ENCODE measurements at regions of chr1 and their contacts with region 1.

Region 1: GRCh38 chr1:227542143-227543120 is 20.9 kb upstream of the ZNF678 start:
- DNase-seq: peak; percentile 70
- H3K4me3 ChIP-seq: peak overlapping the region; percentile 2 to 64 (median 23)
- H3K27ac ChIP-seq: no peak overlapping the region
- H3K4me1 ChIP-seq: peaks cover 8% of the 10 kb centered on the region
- H3K27me3 ChIP-seq: no peaks in the 10 kb centered on the region
- CTCF ChIP-seq: peak; percentile 87 to 96
- POLR2A ChIP-seq: no peak

Region 2: DNA sequence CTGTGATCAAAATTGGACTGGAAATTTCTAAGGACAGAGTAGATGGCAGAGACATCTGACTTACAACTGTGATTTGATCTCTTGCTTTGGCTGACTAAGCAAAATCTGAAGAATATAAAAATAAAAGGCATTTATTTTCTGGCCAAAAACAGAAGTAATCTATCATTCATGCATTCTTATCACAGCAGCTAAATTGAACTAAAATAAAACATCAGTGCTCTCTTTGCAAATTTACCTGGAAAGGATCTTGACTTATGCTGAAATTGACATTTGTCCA is 60.5 kb before region 1 on chr1:
- CTCF ChIA-PET with region 1: interaction called, 35 read pairs
- POLR2A ChIA-PET with region 1: no interaction called
- dilution Hi-C with region 1: no loop called
- intact Hi-C with region 1: loop called (anchors 1 kb)
- DNase-seq: no peak
- H3K4me3 ChIP-seq: no peak overlapping the region
- H3K27ac ChIP-seq: no peak overlapping the region
- H3K4me1 ChIP-seq: no peaks in the 10 kb centered on the region
- H3K27me3 ChIP-seq: peaks cover 2 to 28% of the 10 kb centered on the region in 2 experiments
- CTCF ChIP-seq: no peak
- POLR2A ChIP-seq: no peak

Region 3: DNA sequence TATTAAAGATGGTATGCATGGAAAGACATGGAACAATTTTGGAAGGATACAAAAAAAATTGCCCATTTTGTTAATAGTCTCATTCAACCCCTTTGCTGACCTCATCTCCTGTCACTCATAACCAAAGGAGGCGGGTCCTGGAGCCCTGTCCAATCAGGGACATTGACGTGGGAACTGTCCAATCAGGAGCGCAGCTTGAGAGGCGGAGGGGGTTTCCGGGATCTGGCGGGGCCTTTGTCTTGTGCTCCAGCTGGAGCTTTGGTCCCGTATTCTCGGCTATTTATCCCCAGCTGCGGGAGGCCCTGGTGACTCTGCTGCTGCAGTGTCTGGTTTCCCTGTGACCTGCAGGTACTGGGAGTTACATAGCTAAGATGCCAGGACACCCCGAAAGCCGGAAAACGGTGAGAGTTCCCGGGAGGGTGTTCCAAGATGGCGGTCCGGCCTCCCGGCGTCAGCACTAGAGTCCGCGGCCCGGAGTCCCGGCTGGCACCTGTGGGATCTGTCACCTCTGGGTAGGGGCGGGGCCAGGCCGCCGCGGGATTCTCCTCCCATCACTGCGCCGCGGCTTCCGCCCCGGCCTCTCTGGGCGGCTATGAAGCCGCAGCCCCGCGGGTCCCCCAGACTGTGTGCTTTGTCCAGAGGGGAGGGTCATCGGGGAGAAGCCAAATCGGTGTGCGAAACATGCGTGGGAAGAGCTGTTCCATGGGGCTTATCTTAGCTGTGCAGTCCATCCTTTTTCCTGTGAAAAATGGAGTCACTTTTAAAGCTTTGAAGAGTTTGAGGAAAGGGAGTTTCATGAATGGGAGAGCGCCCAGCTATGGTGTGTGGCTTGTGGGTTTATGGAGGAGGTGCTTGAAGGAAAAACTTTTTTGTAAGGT is 21.1 kb after region 1 on chr1 and contains the start of gene ZNF678:
- CTCF ChIA-PET with region 1: interaction called, 27 read pairs
- POLR2A ChIA-PET with region 1: no interaction called
- dilution Hi-C with region 1: no loop called
- intact Hi-C with region 1: loop called (anchors 1 kb)
- DNase-seq: peak; percentile 94
- H3K4me3 ChIP-seq: peak within 1 kb of the TSS; percentile 70 to 90 (median 90)
- H3K27ac ChIP-seq: peak within 1 kb of the TSS; percentile 94
- H3K4me1 ChIP-seq: peaks cover 5% of the 10 kb centered on the region
- H3K27me3 ChIP-seq: peaks cover 19 to 27% of the 10 kb centered on the region in 2 experiments
- CTCF ChIP-seq: no peak
- POLR2A ChIP-seq: peak; percentile 55
- total RNA-seq, gene ZNF678: 7.5 and 7.7 TPM in 2 replicates